Right ventricle myocardium superior (tissue), 1 donor: ENCODE measurements at regions of chr17 and their contacts with region 1.

Region 1: GRCh38 chr17:42116705-42117396 is 4.3 kb downstream of the KAT2A start:
- DNase-seq: peak; percentile 88
- ATAC-seq: peak; percentile 44

Region 2: DNA sequence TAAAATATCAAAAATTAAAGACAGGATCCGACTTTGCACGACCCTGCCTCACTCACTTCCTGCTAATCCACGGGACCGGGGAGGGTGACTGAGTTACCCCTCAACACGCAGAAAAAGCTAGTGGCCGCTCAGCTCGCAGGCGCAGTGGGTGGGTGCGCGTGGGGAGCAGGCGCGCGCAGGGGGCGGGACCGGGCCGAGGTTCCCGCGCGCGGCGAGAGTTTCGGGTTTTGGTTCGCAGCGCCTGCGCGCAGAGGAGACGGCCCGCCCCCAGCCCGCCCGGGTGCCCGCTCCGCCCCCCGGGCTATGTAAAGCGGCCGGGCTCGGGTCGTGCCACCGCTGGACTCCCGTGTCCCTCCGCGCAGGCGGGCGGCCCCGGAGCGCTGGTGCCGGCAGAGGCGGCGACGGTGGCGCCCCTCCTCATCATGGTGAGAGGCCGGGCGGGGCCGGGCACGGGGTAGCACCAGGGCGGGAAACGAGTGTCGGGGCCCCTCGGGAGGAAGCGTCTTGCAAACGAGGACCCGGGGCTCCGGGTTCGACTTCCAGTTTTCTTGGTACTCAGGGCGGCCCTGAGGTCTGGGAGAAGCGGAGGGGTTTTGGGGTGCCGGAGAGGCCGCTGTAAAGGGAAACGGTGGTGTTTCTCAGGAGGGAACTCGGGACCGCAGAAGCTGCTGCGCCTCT is 150.2 kb before region 1 on chr17 and contains the start of gene CNP:
- intact Hi-C with region 1: loop called (anchors 5 kb)
- DNase-seq: peak; percentile 96
- ATAC-seq: peak; percentile 95
- total RNA-seq, gene CNP: 23.0 TPM

Region 3: GRCh38 chr17:42027961-42028790 is 88.7 kb before region 1 on chr17:
- intact Hi-C with region 1: loop called (anchors 5 kb)
- DNase-seq: no peak
- ATAC-seq: no peak

Region 4: GRCh38 chr17:42183741-42184711 is 67.2 kb after region 1 on chr17:
- intact Hi-C with region 1: loop called (anchors 5 kb)
- DNase-seq: peak; percentile 88
- ATAC-seq: peak; percentile 92